ENCODE measurements at regions of chr15 and their contacts with region 1.

Region 1: GRCh38 chr15:101242160-101242998 is 9.5 kb downstream of the CHSY1 start:
- DNase-seq: peak; percentile 71
- CTCF ChIP-seq: no peak

Region 2: DNA sequence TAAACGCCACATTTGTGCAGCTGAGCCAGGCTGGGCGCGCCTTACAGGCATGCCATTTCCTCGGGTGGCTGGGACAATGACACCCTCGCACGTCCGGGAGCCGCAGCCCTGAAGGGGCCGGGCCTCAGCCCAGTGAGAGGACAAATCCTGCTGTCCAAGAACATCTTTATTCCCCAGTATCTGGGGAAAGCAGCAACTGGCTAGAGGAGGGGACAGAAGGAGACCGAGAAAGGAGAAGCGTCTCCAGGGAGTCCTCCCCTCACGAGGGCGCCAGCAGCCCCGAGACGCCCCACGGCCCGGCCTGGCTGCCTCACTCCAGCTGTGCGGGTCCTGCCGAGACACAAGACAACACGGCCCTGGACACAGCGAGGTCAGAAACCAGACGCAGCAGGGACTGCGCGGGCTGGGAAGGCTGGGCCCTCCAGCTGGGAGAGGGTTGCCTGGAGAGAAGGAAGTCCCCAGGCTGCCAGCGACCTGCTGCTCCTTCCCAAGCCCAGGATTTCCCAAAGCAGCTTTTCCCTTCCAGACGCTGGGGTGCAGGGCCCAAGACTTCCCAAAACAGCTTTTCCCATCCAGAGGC is 120.8 kb before region 1 on chr15:
- in situ Hi-C with region 1: no loop called
- DNase-seq: peak; percentile 77
- CTCF ChIP-seq: peak; percentile 65

Region 3: DNA sequence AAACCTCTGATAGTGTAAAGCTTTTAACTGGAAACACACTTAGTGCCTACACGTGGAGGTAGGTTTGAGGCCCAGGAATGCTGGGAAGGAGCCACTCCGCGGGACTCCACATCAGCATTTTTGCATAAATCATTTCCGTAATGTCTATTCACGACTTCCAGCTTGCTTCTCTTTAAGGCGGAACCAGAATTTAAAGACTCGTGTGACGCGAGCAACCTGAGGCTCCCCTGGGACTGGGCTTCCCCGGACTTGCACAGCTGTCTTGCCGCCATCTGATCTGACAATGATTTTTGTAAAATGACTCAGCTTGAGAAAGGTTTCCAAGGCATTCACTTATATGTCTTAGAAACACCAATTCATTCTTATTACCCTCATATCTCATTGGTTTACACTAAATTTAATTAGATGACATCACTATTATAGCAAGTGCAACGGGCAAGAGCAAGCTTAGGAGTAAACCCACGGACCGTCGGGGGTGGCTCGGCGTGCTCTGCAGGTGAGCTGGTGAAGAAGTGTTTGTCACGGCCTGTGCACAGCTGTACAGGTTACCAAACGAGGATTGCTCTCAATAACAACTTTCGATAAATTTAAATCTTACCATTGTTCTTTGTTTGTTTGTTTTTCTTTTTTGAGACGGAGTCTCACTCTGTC is 85.7 kb before region 1 on chr15:
- in situ Hi-C with region 1: no loop called
- DNase-seq: peak; percentile 88
- CTCF ChIP-seq: no peak

Region 4: GRCh38 chr15:101193120-101193644 is 49.2 kb before region 1 on chr15:
- in situ Hi-C with region 1: loop called (anchors 10 kb)
- DNase-seq: no peak
- CTCF ChIP-seq: no peak

Measured in GM13977 (cell line).